Activated T-helper 2 cell treated with anti-CD3 and anti-CD28 coated beads, Interferon-gamma antibody, Interleukin-2, Interleukin-4, amounts not matched to agents 10 μg/mL and 5 μg/mL and 100 μg/mL, durations not matched to agents 14 hours and 24 hours and 36 hours (primary cell): ENCODE measurements at regions of chr9 and their contacts with region 1.

Region 1: GRCh38 chr9:123544007-123544827 is 188.2 kb downstream of the CRB2 start:
- DNase-seq: no peak
- H3K4me3 Mint-ChIP-seq: no peak overlapping the region
- H3K27ac Mint-ChIP-seq: no peak overlapping the region
- H3K4me1 Mint-ChIP-seq: peaks cover 5% of the 10 kb centered on the region
- H3K27me3 Mint-ChIP-seq: no peaks in the 10 kb centered on the region

Region 2: GRCh38 chr9:123929870-123930831 is 385.9 kb after region 1 on chr9 and contains the start of gene DENND1A:
- intact Hi-C with region 1: loop called (anchors 10 kb)
- DNase-seq: peak; percentile 85
- H3K4me3 Mint-ChIP-seq: peak within 1 kb of the TSS; percentile 86
- H3K27ac Mint-ChIP-seq: peak within 1 kb of the TSS; percentile 83
- H3K4me1 Mint-ChIP-seq: peaks cover 27% of the 10 kb centered on the region
- H3K27me3 Mint-ChIP-seq: peaks cover 5% of the 10 kb centered on the region
- total RNA-seq, gene DENND1A: 15.1 and 20.0 TPM in 2 replicates

Region 3: GRCh38 chr9:124040935-124041816 is 497.0 kb after region 1 on chr9:
- intact Hi-C with region 1: loop called (anchors 2 kb)
- DNase-seq: peak; percentile 26
- H3K4me3 Mint-ChIP-seq: no peak overlapping the region
- H3K27ac Mint-ChIP-seq: no peak overlapping the region
- H3K4me1 Mint-ChIP-seq: peaks cover 8% of the 10 kb centered on the region
- H3K27me3 Mint-ChIP-seq: peaks cover 63% of the 10 kb centered on the region